Caco-2 (cell line): ENCODE measurements at regions of chr6 and their contacts with region 1.

Region 1: GRCh38 chr6:16128759-16129622 is at the start of gene MYLIP:
- DNase-seq: peak; percentile 97 to 99
- H3K4me3 ChIP-seq: peak within 1 kb of the TSS; percentile 99
- H3K4me3 Mint-ChIP-seq: peak within 1 kb of the TSS; percentile 92
- H3K27ac Mint-ChIP-seq: peak within 1 kb of the TSS; percentile 80
- H3K4me1 ChIP-seq: peaks cover 22% of the 10 kb centered on the region
- H3K4me1 Mint-ChIP-seq: peaks cover 10% of the 10 kb centered on the region
- H3K27me3 ChIP-seq: no peaks in the 10 kb centered on the region
- H3K27me3 Mint-ChIP-seq: no peaks in the 10 kb centered on the region
- CTCF ChIP-seq: peak; percentile 57 to 94
- total RNA-seq, gene MYLIP: 46.5 and 48.1 TPM in 2 replicates

Region 2: DNA sequence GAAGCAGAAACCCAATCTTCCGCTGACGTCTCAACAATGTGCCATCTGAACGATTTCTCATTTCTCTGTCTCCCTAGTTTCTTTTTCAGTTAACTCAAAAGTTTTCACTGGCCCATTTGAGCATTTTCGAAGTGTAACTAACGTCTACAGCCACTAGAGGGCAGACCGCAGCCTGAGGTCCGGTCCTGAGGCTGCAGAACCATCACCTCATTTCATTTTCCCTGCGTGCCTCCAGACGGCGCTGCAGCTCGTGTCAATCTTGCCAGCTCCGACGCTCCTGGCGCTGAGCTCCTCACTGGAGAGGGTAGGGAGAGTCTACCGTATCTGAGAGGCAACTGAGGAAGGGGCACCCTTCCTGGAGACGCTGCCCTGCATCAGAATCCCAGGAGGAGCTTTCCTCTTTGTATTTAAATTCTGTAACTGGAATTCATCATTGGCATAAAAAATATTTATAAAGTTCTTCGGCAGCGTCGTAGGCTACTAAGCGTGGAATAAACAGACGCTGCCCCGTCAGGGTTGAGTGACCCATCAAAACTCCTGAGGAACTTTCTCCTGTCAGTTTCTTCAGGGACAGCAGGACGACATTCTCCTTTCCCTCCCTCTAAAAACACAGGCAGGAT is 437.6 kb before region 1 on chr6:
- CTCF ChIA-PET with region 1: interaction called, 38 read pairs
- POLR2A ChIA-PET with region 1: no interaction called
- intact Hi-C with region 1: loop called (anchors 1 kb)
- DNase-seq: peak; percentile 81
- H3K4me3 ChIP-seq: no peak overlapping the region
- H3K4me3 Mint-ChIP-seq: peak overlapping the region; percentile 12
- H3K27ac Mint-ChIP-seq: no peak overlapping the region
- H3K4me1 ChIP-seq: 0 out of 2 replicates have a peak, but pooled peaks cover 5% of the 10 kb centered on the region
- H3K4me1 Mint-ChIP-seq: no peaks in the 10 kb centered on the region
- H3K27me3 ChIP-seq: no peaks in the 10 kb centered on the region
- H3K27me3 Mint-ChIP-seq: no peaks in the 10 kb centered on the region
- CTCF ChIP-seq: peak; percentile 99

Region 3: DNA sequence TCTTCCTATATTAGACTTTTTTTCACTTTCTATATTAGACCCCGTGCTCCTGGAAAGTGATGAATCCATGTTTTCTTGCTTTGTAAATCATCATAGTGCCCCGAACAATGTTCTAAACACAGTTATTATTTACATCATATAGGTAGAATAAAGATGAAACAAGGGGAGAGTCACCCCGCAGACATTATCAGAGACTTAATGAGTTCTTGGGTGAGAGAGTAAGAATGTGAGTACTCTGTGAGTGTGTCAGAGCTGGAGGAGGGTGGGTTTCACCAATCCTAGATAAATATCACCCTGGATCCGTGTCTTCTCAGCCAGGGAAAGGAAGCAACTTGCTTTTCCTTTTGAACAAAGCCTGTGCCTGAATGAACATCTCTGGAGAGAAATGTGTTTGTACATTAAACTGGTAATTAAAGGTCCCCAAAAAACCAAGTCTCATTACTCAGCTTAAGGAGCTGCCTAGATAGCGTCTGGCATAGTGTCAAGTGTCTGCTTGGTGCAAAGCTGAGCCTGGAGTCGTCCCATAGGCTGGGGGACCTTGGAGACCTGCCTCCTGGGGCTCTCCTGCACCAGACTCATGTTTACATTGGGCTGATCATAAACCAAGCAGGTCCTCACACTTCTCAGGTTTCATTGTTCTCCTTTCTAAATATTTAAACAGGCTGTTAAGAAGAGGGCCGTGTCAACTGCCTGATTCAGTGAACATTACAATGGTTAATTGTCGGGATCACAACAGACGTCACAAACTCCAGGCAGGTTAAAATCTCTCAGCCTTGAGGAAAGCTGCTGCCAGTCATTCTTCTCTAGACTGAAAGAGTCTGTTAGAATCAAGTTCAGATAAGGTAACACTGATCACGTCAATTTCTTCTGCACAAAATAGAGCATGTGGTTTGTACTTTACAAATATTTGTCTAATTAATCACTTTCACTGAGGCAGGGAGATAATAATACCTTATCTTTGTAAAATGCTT is 179.8 kb before region 1 on chr6:
- CTCF ChIA-PET with region 1: interaction called, 3 read pairs
- POLR2A ChIA-PET with region 1: interaction called, 7 read pairs
- intact Hi-C with region 1: loop called (anchors 1 kb)
- DNase-seq: peak; percentile 76 to 80
- H3K4me3 ChIP-seq: no peak overlapping the region
- H3K4me3 Mint-ChIP-seq: peak overlapping the region; percentile 39
- H3K27ac Mint-ChIP-seq: no peak overlapping the region
- H3K4me1 ChIP-seq: peaks cover 16% of the 10 kb centered on the region
- H3K4me1 Mint-ChIP-seq: peaks cover 12% of the 10 kb centered on the region
- H3K27me3 ChIP-seq: no peaks in the 10 kb centered on the region
- H3K27me3 Mint-ChIP-seq: no peaks in the 10 kb centered on the region
- CTCF ChIP-seq: no peak

Region 4: DNA sequence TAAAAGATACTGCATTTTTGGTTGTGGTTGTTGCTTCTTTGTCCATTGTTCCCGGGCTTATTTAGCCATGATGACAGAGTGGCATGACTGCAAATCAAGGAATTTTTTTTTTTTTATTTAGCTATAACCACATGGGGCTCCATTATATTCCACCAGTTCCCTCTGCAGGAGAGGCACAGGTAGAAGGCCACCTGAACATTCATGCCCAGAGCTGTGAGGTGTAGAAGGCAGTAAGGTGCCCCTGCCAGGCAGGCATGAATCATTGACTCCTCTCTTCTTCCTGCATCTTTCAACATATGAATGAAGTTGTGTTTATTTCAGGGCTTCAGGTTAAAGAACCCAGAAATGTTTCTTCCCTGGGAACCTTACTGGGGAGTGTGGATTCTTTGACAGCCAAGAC is 92.3 kb before region 1 on chr6:
- CTCF ChIA-PET with region 1: no interaction called
- POLR2A ChIA-PET with region 1: interaction called, 10 read pairs
- intact Hi-C with region 1: no loop called
- DNase-seq: no peak
- H3K4me3 ChIP-seq: no peak overlapping the region
- H3K4me3 Mint-ChIP-seq: no peak overlapping the region
- H3K27ac Mint-ChIP-seq: no peak overlapping the region
- H3K4me1 ChIP-seq: no peaks in the 10 kb centered on the region
- H3K4me1 Mint-ChIP-seq: no peaks in the 10 kb centered on the region
- H3K27me3 ChIP-seq: no peaks in the 10 kb centered on the region
- H3K27me3 Mint-ChIP-seq: no peaks in the 10 kb centered on the region
- CTCF ChIP-seq: no peak

Region 5: DNA sequence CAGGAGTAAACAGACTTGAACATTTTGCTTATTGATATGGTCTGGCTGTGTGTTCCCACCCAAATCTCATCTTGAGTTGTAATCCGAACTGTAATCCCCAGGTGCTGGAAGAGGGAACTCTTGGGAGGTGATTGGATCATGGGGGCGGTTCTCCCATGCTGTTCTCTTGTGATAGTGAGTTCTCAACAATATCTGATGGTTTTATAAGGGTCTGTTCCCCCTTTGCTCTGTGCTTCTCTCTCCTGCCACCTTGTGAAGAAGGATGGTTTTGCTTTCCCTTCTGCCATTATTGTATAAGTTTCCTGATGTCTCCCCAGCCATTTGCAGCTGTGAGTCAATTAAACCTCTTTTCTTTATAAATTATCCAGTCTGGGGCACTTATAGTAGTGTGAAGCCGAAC is 39.9 kb after region 1 on chr6:
- CTCF ChIA-PET with region 1: interaction called, 8 read pairs
- POLR2A ChIA-PET with region 1: interaction called, 12 read pairs
- intact Hi-C with region 1: loop called (anchors 1 kb)
- DNase-seq: peak in 1 of 2 experiments; percentile 37
- H3K4me3 ChIP-seq: no peak overlapping the region
- H3K4me3 Mint-ChIP-seq: peak overlapping the region; percentile 65
- H3K27ac Mint-ChIP-seq: peak overlapping the region; percentile 88
- H3K4me1 ChIP-seq: peaks cover 74% of the 10 kb centered on the region
- H3K4me1 Mint-ChIP-seq: peaks cover 67% of the 10 kb centered on the region
- H3K27me3 ChIP-seq: no peaks in the 10 kb centered on the region
- H3K27me3 Mint-ChIP-seq: no peaks in the 10 kb centered on the region
- CTCF ChIP-seq: peak; percentile 27 to 57

Region 6: GRCh38 chr6:16206595-16207037 is 77.6 kb after region 1 on chr6:
- CTCF ChIA-PET with region 1: interaction called, 5 read pairs
- POLR2A ChIA-PET with region 1: interaction called, 12 read pairs
- intact Hi-C with region 1: loop called (anchors 1 kb)
- DNase-seq: peak; percentile 56 to 72
- H3K4me3 ChIP-seq: no peak overlapping the region
- H3K4me3 Mint-ChIP-seq: no peak overlapping the region
- H3K27ac Mint-ChIP-seq: peak overlapping the region; percentile 39
- H3K4me1 ChIP-seq: peaks cover 21% of the 10 kb centered on the region
- H3K4me1 Mint-ChIP-seq: peaks cover 16% of the 10 kb centered on the region
- H3K27me3 ChIP-seq: no peaks in the 10 kb centered on the region
- H3K27me3 Mint-ChIP-seq: peaks cover 6% of the 10 kb centered on the region
- CTCF ChIP-seq: peak; percentile 82 to 93

Region 7: DNA sequence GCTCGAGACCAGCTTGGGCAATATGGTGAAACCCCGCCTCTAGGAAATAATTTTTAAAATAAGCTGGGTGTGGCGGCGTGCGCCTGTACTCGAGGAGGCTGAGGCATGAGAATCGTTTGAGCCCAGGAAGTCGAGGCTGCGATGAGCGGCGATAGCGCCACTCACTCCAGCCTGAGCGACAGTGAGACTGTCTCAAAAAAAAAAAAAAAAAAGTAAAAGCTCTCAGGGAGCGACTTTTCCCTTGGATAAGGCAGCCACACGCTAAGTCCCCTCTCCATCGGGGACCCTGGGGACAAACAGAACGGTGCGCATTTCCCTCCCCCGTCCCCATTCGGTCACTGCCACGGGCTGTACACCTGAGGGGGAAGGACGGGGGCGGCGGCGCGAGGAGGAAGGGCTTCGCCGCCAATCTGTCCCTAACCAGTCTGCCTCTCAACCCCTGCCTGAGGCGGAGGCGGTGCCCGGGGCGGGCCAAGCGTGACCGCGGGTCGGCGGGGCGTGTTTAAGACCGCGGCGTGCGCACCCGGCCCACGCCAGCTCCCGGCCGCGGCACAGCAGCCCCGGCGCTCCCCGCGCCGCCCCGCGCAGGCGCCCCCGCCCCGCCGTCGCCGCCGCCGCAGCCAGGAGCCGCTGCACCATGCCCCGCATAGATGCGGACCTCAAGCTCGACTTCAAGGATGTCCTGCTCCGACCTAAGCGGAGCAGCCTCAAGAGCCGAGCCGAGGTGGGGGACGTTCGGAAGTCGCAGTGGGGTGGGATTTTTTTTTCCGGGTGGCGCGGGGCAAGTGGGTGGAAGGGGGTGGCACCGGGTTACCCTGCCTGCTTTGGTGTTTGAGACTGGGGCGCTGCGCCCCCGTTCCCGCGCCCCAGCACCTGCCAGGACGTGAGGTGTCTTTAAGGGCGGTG is 109.3 kb after region 1 on chr6 and contains the start of gene GMPR:
- CTCF ChIA-PET with region 1: no interaction called
- POLR2A ChIA-PET with region 1: no interaction called
- intact Hi-C with region 1: no loop called
- DNase-seq: peak; percentile 63 to 66
- H3K4me3 ChIP-seq: peak within 1 kb of the TSS; percentile 57
- H3K4me3 Mint-ChIP-seq: peak within 1 kb of the TSS; percentile 91
- H3K27ac Mint-ChIP-seq: peak within 1 kb of the TSS; percentile 27
- H3K4me1 ChIP-seq: peaks cover 5% of the 10 kb centered on the region
- H3K4me1 Mint-ChIP-seq: no peaks in the 10 kb centered on the region
- H3K27me3 ChIP-seq: no peaks in the 10 kb centered on the region
- H3K27me3 Mint-ChIP-seq: peaks cover 8% of the 10 kb centered on the region
- CTCF ChIP-seq: no peak
- total RNA-seq, gene GMPR: 1.1 and 1.3 TPM in 2 replicates

Region 8: DNA sequence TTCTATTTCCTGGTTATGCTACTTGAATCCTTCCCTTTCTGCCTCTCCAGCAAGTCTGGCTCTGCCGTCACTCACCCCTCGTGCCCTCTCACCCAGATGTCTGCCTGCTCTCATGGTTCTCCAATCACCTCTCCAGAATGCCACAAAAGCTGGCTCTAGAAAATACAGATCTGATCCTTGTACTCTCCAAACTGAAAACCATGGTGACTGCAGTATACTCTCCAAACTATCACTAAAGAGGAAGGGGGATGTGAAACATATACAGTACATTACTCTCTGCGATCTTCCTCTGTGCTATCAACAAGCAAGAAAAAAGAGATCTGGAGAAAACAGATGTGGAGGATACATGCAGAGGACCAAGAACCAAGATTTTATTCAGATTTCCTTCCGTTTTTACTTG is 541.2 kb after region 1 on chr6:
- CTCF ChIA-PET with region 1: no interaction called
- POLR2A ChIA-PET with region 1: no interaction called
- intact Hi-C with region 1: no loop called
- DNase-seq: no peak
- H3K4me3 ChIP-seq: no peak overlapping the region
- H3K4me3 Mint-ChIP-seq: no peak overlapping the region
- H3K27ac Mint-ChIP-seq: no peak overlapping the region
- H3K4me1 ChIP-seq: no peaks in the 10 kb centered on the region
- H3K4me1 Mint-ChIP-seq: peaks cover 2% of the 10 kb centered on the region
- H3K27me3 ChIP-seq: no peaks in the 10 kb centered on the region
- H3K27me3 Mint-ChIP-seq: no peaks in the 10 kb centered on the region
- CTCF ChIP-seq: no peak